Activated naive CD4-positive, alpha-beta T cell treated with anti-CD3 and anti-CD28 coated beads for 36 hours (primary cell): ENCODE measurements at regions of chr12 and their contacts with region 1.

Region 1: GRCh38 chr12:65169320-65170208 is at the start of gene LEMD3:
- DNase-seq: peak; percentile 96
- H3K4me3 Mint-ChIP-seq: peak within 1 kb of the TSS; percentile 85
- H3K27ac Mint-ChIP-seq: peak within 1 kb of the TSS; percentile 91
- H3K4me1 Mint-ChIP-seq: peaks cover 19% of the 10 kb centered on the region
- H3K27me3 Mint-ChIP-seq: no peaks in the 10 kb centered on the region
- total RNA-seq, gene LEMD3: 16.5 to 17.5 TPM

Region 2: DNA sequence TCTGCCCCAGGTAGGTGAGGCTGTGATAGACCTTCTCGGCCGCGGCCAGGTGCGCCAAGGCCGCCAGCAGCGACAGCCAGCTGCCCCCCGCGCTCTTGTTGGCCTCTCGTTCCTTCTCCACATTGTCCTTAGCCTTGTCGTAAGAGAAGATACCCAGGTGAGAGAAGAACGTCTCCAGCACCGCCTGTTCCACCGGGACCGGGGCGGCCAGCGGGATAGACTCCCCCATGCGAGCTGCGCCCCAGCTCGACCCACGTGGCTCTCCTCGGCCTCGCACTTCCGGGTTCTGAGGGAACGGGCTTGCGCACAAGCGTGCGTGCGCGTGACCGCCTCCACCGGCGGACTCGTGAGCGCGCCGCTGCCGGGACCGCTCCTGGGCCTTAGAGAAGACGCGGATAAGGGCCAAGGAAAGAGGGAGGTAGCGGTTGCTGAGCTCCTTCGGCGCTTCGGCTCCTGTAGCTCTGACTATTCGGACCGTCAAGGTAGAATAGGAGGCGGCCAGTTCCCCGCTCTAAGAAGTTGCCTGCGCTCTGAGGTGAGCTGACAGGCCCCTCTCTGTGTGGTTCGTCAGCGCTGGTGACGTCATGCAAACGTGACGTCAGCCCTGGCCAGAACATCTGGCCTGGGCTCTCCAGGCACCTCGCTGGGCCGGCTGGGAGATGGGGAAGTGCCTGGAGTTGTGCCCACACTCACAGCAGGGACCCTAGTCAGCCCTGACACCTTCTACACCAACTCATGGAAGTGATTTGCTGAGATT is 947.4 kb before region 1 on chr12 and contains the start of gene KICS2:
- CTCF ChIA-PET with region 1: no interaction called
- intact Hi-C with region 1: loop called (anchors 5 kb)
- DNase-seq: peak; percentile 92
- H3K4me3 Mint-ChIP-seq: peak within 1 kb of the TSS; percentile 92
- H3K27ac Mint-ChIP-seq: peak within 1 kb of the TSS; percentile 91
- H3K4me1 Mint-ChIP-seq: peaks cover 26% of the 10 kb centered on the region
- H3K27me3 Mint-ChIP-seq: no peaks in the 10 kb centered on the region
- total RNA-seq, gene KICS2: 13.3 to 15.6 TPM

Region 3: DNA sequence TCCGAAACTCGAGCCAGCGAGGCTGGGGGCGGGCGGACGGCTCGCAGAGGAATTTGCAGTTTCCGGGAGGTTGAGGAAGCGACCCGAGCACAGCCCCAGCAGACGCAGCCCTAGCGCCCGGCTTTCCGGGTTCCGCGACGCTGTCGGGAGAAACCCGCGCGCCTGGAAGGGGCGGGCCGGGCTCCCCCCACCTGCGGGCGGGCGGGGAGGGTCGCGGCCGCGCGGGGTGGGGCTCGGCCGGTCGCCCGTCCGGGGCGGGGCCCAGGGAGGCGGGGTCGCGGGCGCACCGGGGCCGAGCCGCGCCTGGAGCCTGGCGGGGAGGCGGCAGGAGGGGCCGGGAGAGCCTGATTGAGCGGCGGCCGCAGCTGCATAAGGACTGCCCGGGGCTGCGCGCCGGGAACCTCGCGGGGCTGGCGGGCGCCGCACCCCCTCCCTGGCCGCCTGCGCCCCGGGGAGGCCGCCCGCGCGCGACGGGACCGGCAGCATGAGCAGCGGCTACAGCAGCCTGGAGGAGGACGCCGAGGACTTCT is 559.4 kb before region 1 on chr12 and contains the start of gene RASSF3:
- CTCF ChIA-PET with region 1: no interaction called
- intact Hi-C with region 1: loop called (anchors 2 kb)
- DNase-seq: peak; percentile 83
- H3K4me3 Mint-ChIP-seq: peak within 1 kb of the TSS; percentile 95
- H3K27ac Mint-ChIP-seq: peak within 1 kb of the TSS; percentile 96
- H3K4me1 Mint-ChIP-seq: peaks cover 43% of the 10 kb centered on the region
- H3K27me3 Mint-ChIP-seq: no peaks in the 10 kb centered on the region
- total RNA-seq, gene RASSF3: 39.4 to 43.8 TPM

Region 4: GRCh38 chr12:65051218-65051617 is 118.3 kb before region 1 on chr12:
- CTCF ChIA-PET with region 1: no interaction called
- intact Hi-C with region 1: no loop called
- DNase-seq: no peak
- H3K4me3 Mint-ChIP-seq: no peak overlapping the region
- H3K27ac Mint-ChIP-seq: no peak overlapping the region
- H3K4me1 Mint-ChIP-seq: no peaks in the 10 kb centered on the region
- H3K27me3 Mint-ChIP-seq: peaks cover 11% of the 10 kb centered on the region

Region 5: DNA sequence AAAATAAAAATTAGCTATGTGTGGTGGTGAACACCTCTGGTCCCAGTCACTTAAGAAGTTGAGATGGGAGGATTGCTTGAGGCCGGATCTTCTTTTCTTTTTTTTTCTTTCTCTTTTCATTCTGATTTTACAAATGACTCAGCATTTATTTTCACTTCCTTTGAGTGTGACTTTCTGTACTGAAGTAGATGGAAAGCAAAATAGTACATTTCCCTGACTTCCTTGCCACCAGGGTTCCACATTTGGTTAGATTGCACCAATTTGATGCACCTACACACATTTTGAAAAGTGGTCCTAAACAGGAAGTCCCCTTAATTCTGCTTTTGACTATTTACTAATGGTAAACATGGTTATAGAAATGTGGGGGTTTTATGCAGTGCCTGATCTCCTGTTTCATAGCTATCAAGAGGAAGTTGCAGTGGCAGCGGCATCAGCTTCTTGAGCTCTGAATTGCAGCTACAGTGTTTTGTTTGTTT is 13.2 kb before region 1 on chr12:
- CTCF ChIA-PET with region 1: interaction called, 13 read pairs
- intact Hi-C with region 1: loop called (anchors 1 kb)
- DNase-seq: peak; percentile 35
- H3K4me3 Mint-ChIP-seq: peak overlapping the region; percentile 19
- H3K27ac Mint-ChIP-seq: peak overlapping the region; percentile 37
- H3K4me1 Mint-ChIP-seq: peaks cover 16% of the 10 kb centered on the region
- H3K27me3 Mint-ChIP-seq: peaks cover 12% of the 10 kb centered on the region

Region 6: DNA sequence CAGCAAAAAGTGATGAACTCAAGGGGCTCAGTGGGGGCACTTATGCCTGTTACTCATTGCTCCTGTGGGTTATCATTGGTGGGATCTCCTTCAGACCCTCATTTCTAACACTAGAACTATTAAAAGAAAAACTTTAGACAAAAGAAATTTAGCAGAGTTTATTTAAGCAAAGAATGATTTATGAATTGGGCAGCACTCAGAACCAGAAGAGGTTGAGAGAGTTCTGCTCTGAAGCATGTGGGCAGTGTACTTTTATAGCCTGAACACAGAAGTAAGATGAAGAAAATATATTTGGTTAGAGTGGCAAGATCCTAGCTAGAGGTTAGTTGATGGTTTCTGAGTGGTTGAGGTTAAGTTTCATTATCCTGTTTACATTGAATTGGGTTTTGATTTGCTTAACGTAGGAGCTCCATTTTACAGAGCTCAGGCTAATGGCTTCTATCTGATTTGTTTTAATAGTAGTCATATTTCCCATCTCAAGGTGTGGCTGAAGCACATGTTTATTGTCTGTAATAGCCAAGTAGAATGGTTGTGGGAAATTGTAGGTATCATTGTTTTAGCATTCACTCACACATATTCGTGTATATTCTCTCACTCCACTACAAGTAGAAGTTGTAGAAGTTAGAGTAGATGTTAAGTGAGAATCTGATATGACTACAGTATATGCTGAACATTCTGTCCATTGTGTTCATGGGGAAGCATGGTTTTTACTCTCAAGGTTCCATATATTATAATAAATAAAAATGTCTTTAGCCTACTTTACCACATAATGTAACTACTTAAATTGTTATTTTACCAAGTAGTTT is 27.4 kb after region 1 on chr12:
- CTCF ChIA-PET with region 1: no interaction called
- intact Hi-C with region 1: loop called (anchors 1 kb)
- DNase-seq: no peak
- H3K4me3 Mint-ChIP-seq: no peak overlapping the region
- H3K27ac Mint-ChIP-seq: peak overlapping the region; percentile 28
- H3K4me1 Mint-ChIP-seq: peaks cover 66% of the 10 kb centered on the region
- H3K27me3 Mint-ChIP-seq: no peaks in the 10 kb centered on the region

Region 7: DNA sequence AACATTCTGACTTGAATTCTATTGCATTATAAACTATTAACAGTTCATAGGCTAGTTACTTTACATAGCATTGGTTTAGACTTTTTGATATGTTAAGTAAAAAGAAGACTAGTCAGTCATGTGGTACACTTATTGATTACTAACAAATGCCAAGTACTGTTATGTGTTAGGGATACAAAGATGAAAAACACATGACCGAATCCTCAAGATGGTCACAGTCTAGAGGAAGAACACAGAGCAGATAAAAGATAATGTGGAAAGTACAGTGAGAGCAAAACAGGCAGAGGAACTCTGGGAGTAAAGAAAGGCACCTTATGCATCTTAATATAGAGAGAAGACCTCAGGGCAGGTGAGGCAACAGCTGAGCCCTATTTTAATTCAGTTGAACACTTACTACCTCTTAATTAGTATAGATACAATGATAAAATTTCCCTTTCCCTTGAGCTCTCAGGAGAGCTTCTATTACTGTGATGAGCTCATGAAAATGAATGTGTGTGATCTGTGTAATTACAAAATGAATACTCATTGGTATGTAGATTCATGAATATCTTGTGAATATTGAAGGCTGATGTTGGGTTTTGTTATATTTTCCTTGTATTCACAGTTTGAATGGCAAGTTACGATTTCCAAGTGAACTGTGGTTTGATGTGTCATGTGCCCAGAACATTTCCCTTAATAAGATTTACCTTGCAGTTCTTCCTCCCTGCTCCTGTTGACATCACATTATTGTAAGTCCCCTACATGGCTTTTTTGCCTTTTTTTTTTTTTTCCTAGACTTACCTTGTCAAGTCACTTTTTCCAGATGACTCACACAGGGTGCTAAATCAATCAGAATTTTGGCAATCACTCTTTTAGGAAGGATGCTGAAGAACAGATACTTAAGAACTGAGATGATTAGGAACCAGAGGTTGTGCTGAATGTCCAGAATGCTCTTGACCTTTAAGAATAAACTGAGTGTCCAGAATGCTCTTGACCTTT is 79.4 kb after region 1 on chr12:
- CTCF ChIA-PET with region 1: no interaction called
- intact Hi-C with region 1: loop called (anchors 1 kb)
- DNase-seq: peak; percentile 40
- H3K4me3 Mint-ChIP-seq: no peak overlapping the region
- H3K27ac Mint-ChIP-seq: peak overlapping the region; percentile 32
- H3K4me1 Mint-ChIP-seq: peaks cover 19% of the 10 kb centered on the region
- H3K27me3 Mint-ChIP-seq: no peaks in the 10 kb centered on the region

Region 8: GRCh38 chr12:65389436-65389835 is 219.9 kb after region 1 on chr12:
- CTCF ChIA-PET with region 1: no interaction called
- intact Hi-C with region 1: no loop called
- DNase-seq: no peak
- H3K4me3 Mint-ChIP-seq: no peak overlapping the region
- H3K27ac Mint-ChIP-seq: no peak overlapping the region
- H3K4me1 Mint-ChIP-seq: no peaks in the 10 kb centered on the region
- H3K27me3 Mint-ChIP-seq: peaks cover 1% of the 10 kb centered on the region